Ovary (tissue), 10 donors: ENCODE measurements at regions of chr6 and their contacts with region 1.

Region 1: DNA sequence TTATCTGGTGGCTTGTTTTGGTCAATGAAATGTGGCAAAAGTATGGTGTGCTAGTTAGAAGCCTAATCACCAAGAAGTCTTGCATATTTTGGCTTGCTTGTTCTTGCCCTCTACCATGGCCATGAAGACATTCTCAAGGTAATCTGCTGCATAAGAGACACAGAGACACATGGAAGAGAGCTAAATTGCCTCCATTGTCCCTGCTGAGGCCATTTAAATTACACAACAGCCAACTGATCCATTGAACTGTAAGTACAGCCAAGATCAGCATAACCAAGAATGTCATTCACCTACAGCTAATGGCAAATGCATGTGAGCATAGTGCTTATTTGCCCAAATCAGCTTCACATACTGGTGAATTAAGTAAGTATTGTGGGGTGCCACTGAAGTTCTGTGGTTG is 603.8 kb downstream of the FRK start:
- DNase-seq: no peak
- H3K4me3 ChIP-seq: no peak overlapping the region
- H3K27ac ChIP-seq: no peak overlapping the region
- H3K4me1 ChIP-seq: no peaks in the 10 kb centered on the region
- H3K27me3 ChIP-seq: peaks cover 2% of the 10 kb centered on the region
- CTCF ChIP-seq: no peak
- EP300 ChIP-seq: no peak
- POLR2A ChIP-seq: no peak

Region 2: GRCh38 chr6:115287467-115287866 is 169.4 kb before region 1 on chr6:
- intact Hi-C with region 1: no loop called
- DNase-seq: no peak
- H3K4me3 ChIP-seq: no peak overlapping the region
- H3K27ac ChIP-seq: no peak overlapping the region
- H3K4me1 ChIP-seq: no peaks in the 10 kb centered on the region
- H3K27me3 ChIP-seq: no peaks in the 10 kb centered on the region
- CTCF ChIP-seq: no peak
- EP300 ChIP-seq: no peak
- POLR2A ChIP-seq: no peak

Region 3: DNA sequence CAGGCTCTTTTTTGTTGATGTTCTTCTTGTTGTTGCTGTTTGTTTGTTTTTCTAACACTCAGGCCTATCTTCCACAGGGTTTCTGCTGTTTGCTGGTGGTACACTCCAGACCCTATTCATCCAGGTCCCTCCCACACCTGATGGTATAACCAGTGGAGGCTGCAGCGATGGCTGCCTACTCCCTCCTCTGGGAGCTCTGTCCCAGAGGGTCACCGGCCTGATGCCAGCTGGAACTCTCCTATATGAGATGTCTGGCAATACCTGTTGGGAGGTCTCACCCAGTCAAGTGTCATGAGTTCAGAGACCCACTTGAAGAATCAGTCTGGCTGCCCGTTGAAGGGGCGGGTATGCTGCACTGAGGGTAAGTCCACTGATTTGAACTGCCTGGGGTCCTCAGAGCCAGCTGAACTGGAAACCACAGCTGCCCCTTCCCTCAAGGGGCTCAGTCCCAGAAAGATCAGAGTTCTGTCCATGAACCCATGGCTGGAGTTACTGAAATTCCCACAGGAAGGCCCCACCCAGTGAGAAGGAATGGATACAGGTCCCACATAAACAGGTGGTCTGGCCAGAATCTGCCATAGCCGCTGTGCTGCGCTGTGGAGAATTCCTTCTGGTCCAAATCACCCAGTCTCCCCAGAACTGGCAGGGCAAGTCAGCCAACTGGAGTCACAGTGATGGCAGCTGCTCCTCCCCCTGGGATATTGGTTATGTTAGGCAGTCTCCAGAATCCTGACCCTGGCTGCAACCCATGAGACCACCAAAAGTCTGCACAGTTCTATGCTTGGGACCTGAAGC is 60.5 kb before region 1 on chr6:
- intact Hi-C with region 1: no loop called
- DNase-seq: peak in 1 of 5 donors; percentile 13
- H3K4me3 ChIP-seq: no peak overlapping the region
- H3K27ac ChIP-seq: no peak overlapping the region
- H3K4me1 ChIP-seq: no peaks in the 10 kb centered on the region
- H3K27me3 ChIP-seq: no peaks in the 10 kb centered on the region
- CTCF ChIP-seq: no peak
- EP300 ChIP-seq: no peak
- POLR2A ChIP-seq: no peak

Region 4: GRCh38 chr6:115514656-115515055 is 57.8 kb after region 1 on chr6:
- intact Hi-C with region 1: no loop called
- DNase-seq: no peak
- H3K4me3 ChIP-seq: no peak overlapping the region
- H3K27ac ChIP-seq: no peak overlapping the region
- H3K4me1 ChIP-seq: no peaks in the 10 kb centered on the region
- H3K27me3 ChIP-seq: no peaks in the 10 kb centered on the region
- CTCF ChIP-seq: no peak
- EP300 ChIP-seq: no peak
- POLR2A ChIP-seq: no peak

Region 5: GRCh38 chr6:117188627-117189201 is 1731.9 kb after region 1 on chr6:
- intact Hi-C with region 1: loop called in 1 of 4 experiments (anchors 10 kb)
- DNase-seq: no peak
- H3K4me3 ChIP-seq: no peak overlapping the region
- H3K27ac ChIP-seq: no peak overlapping the region
- H3K4me1 ChIP-seq: no peaks in the 10 kb centered on the region
- H3K27me3 ChIP-seq: no peaks in the 10 kb centered on the region
- CTCF ChIP-seq: no peak
- EP300 ChIP-seq: no peak
- POLR2A ChIP-seq: no peak